Activated CD4-positive, alpha-beta memory T cell treated with anti-CD3 and anti-CD28 coated beads for 36 hours (primary cell): ENCODE measurements at regions of chr3 and their contacts with region 1.

Region 1: DNA sequence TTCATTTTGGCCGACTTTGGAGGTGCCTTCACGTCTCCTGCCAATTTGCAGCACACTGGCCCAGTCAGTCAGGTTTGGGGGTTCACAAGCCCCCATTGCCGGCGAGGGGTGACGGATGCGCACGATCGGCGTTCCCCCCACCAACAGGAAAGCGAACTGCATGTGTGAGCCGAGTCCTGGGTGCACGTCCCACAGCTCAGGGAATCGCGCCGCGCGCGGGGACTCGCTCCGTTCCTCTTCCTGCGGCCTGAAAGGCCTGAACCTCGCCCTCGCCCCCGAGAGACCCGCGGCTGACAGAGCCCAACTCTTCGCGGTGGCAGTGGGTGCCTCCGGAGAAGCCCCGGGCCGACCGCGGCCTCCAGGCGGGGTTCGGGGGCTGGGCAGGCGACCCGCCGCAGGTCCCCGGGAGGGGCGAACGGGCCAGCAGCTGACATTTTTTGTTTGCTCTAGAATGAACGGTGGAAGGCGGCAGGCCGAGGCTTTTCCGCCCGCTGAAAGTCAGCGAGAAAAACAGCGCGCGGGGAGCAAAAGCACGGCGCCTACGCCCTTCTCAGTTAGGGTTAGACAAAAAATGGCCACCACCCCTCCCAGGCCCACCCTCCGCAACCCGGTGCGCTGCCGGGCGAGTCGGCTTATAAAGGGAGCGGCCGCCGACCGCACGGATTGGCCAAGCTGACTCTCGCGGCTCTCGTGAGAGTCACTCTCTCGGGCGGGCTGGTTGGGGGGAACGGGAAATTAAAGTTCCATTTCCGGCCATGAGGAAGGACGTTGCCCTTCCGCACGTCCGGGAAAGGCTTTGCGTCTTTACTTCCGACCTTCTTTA is at the start of gene TERC:
- DNase-seq: peak; percentile 95
- H3K4me3 Mint-ChIP-seq: peak within 1 kb of the TSS; percentile 96
- H3K27ac Mint-ChIP-seq: peak within 1 kb of the TSS; percentile 99
- H3K4me1 Mint-ChIP-seq: peaks cover 22% of the 10 kb centered on the region
- H3K27me3 Mint-ChIP-seq: no peaks in the 10 kb centered on the region
- total RNA-seq, gene TERC: 11.5 to 19.2 TPM

Region 2: GRCh38 chr3:169863458-169863899 is 98.8 kb after region 1 on chr3:
- CTCF ChIA-PET with region 1: no interaction called
- POLR2A ChIA-PET with region 1: no interaction called
- intact Hi-C with region 1: loop called (anchors 1 kb)
- DNase-seq: peak; percentile 79
- H3K4me3 Mint-ChIP-seq: no peak overlapping the region
- H3K27ac Mint-ChIP-seq: no peak overlapping the region
- H3K4me1 Mint-ChIP-seq: peaks cover 8% of the 10 kb centered on the region
- H3K27me3 Mint-ChIP-seq: peaks cover 10% of the 10 kb centered on the region

Region 3: GRCh38 chr3:170007031-170007663 is 242.5 kb after region 1 on chr3:
- CTCF ChIA-PET with region 1: no interaction called
- POLR2A ChIA-PET with region 1: no interaction called
- intact Hi-C with region 1: loop called (anchors 2 kb)
- DNase-seq: peak; percentile 67
- H3K4me3 Mint-ChIP-seq: peak overlapping the region; percentile 16
- H3K27ac Mint-ChIP-seq: peak overlapping the region; percentile 44
- H3K4me1 Mint-ChIP-seq: peaks cover 36% of the 10 kb centered on the region
- H3K27me3 Mint-ChIP-seq: peaks cover 2% of the 10 kb centered on the region

Region 4: DNA sequence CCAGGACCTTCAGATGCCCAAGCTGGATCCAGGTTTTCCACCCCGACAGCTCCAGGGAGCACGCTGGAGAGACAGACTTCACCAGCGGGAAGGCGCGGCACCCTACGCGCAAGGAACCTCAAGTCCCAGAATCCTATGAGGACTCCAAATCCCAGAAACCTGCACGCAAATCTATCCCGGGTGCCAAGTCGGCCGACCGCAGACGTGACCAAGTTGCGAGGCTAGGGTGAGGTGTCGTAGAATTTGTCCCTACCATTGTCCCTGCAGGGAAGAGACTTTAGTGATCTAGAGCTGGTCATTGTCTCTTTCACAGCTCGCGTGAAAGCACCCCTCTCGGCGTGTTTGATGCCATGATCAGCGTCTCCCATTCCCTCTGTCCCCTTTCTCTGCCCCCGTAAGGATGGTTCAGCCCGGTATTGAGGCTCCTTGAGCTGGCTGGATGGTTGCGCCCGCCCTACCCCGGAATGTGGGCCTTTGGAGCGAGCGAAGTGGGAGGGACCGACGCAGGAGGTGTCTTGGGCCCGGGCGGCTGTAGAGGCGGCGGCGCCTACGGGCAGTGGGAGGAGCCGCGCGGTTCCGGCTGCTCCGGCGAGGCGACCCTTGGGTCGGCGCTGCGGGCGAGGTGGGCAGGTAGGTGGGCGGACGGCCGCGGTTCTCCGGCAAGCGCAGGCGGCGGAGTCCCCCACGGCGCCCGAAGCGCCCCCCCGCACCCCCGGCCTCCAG is 457.4 kb after region 1 on chr3 and contains the start of gene PRKCI:
- CTCF ChIA-PET with region 1: no interaction called
- POLR2A ChIA-PET with region 1: no interaction called
- intact Hi-C with region 1: loop called (anchors 1 kb)
- DNase-seq: peak; percentile 95
- H3K4me3 Mint-ChIP-seq: peak within 1 kb of the TSS; percentile 93
- H3K27ac Mint-ChIP-seq: peak within 1 kb of the TSS; percentile 91
- H3K4me1 Mint-ChIP-seq: peaks cover 25% of the 10 kb centered on the region
- H3K27me3 Mint-ChIP-seq: no peaks in the 10 kb centered on the region
- total RNA-seq, gene PRKCI: 27.0 to 27.6 TPM

Region 5: GRCh38 chr3:170419557-170420087 is 655.0 kb after region 1 on chr3:
- CTCF ChIA-PET with region 1: no interaction called
- POLR2A ChIA-PET with region 1: no interaction called
- intact Hi-C with region 1: loop called (anchors 10 kb)
- DNase-seq: no peak
- H3K4me3 Mint-ChIP-seq: no peak overlapping the region
- H3K27ac Mint-ChIP-seq: no peak overlapping the region
- H3K4me1 Mint-ChIP-seq: peaks cover 16% of the 10 kb centered on the region
- H3K27me3 Mint-ChIP-seq: peaks cover 30% of the 10 kb centered on the region